ENCODE measurements at regions of chr22 and their contacts with region 1.

Region 1: GRCh38 chr22:40679964-40680818 is 907 bp downstream of the MCHR1 start:
- DNase-seq: no peak
- ATAC-seq: no peak
- H3K4me3 Mint-ChIP-seq: no peak overlapping the region
- H3K27ac Mint-ChIP-seq: no peak overlapping the region
- H3K4me1 Mint-ChIP-seq: peaks cover 30% of the 10 kb centered on the region
- H3K27me3 Mint-ChIP-seq: peaks cover 20% of the 10 kb centered on the region
- CTCF ChIP-seq: no peak

Region 2: DNA sequence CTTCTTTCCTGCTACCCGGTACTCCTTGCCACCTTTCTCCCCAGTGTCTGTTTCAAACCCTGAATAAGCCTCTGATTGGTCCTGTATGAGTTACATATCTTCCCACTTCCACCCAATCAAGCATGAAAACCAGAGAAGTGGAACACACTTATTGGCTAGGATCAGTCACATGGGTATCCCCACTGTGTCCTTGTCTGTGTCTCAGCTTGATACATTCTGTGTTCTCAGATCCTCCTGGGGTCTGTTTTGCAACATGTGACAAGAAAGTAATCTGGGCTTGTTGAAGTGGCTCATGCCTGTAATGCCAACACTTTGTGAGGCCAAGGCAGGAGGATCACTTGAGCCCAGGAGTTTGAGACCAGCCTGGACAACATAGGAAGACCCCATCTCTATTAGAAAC is 23.0 kb after region 1 on chr22:
- CTCF ChIA-PET with region 1: interaction called, 16 read pairs
- POLR2A ChIA-PET with region 1: interaction called, 5 read pairs
- intact Hi-C with region 1: no loop called
- DNase-seq: no peak
- ATAC-seq: peak; percentile 34
- H3K4me3 Mint-ChIP-seq: no peak overlapping the region
- H3K27ac Mint-ChIP-seq: no peak overlapping the region
- H3K4me1 Mint-ChIP-seq: peaks cover 10% of the 10 kb centered on the region
- H3K27me3 Mint-ChIP-seq: no peaks in the 10 kb centered on the region
- CTCF ChIP-seq: no peak

Region 3: GRCh38 chr22:40757071-40757470 is 76.9 kb after region 1 on chr22:
- CTCF ChIA-PET with region 1: interaction called, 42 read pairs
- POLR2A ChIA-PET with region 1: no interaction called
- intact Hi-C with region 1: loop called (anchors 5 kb)
- DNase-seq: no peak
- ATAC-seq: no peak
- H3K4me3 Mint-ChIP-seq: no peak overlapping the region
- H3K27ac Mint-ChIP-seq: no peak overlapping the region
- H3K4me1 Mint-ChIP-seq: peaks cover 2% of the 10 kb centered on the region
- H3K27me3 Mint-ChIP-seq: no peaks in the 10 kb centered on the region
- CTCF ChIP-seq: no peak

Region 4: DNA sequence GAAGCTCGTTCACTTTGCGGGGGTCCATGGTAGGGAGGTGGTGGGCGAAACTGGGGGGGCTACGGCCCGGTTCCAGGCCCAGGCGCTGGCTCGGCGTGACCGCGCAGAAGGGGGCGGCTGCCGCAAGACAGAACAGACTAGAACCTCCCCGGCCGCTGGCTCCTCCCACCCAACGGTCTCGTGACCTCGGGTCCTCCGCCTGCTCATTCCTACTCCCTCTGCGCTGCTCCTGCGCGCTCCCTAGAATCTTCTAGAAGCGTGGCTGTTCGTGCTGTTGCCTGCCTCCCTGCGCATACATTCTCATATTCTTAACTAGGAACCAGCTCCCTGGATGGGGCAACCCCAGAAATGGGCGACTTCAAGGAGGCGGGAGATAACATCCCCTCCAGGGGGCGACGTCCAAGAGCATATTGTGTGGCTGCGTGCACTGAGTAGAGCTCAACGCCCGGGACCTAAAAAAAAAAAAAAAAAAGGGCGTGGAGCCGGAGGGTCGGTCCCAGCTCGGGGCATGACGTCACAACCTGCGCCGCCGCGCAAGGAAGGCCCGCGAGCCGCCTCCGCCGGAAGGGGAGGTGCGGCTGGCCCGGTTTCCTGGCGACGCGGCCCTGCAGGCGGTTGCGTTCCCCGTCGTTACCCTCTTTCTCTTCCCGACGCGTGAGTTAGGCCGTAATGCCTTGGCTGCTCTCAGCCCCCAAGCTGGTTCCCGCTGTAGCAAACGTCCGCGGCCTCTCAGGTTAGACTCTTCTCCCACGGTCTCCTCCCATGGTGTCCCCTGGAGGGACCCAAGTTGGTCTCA is 176.5 kb after region 1 on chr22 and contains the starts of genes ST13 and XPNPEP3:
- CTCF ChIA-PET with region 1: interaction called, 11 read pairs
- POLR2A ChIA-PET with region 1: no interaction called
- intact Hi-C with region 1: no loop called
- DNase-seq: peak; percentile 98
- ATAC-seq: peak; percentile 93
- H3K4me3 Mint-ChIP-seq: peak within 1 kb of the TSS; percentile 94
- H3K27ac Mint-ChIP-seq: peak within 1 kb of the TSS; percentile 100
- H3K4me1 Mint-ChIP-seq: peaks cover 49% of the 10 kb centered on the region
- H3K27me3 Mint-ChIP-seq: no peaks in the 10 kb centered on the region
- CTCF ChIP-seq: peak; percentile 16
- total RNA-seq, gene ST13: 237 to 249 TPM
- total RNA-seq, gene XPNPEP3: 24.4 to 25.5 TPM